ENCODE measurements at regions of chr9 and their contacts with region 1.

Region 1: GRCh38 chr9:36328798-36329411 is 70.7 kb upstream of the GNE start:
- DNase-seq: peak; percentile 88
- H3K4me3 Mint-ChIP-seq: no peak overlapping the region
- H3K27ac Mint-ChIP-seq: no peak overlapping the region
- H3K4me1 Mint-ChIP-seq: peaks cover 4% of the 10 kb centered on the region
- H3K27me3 Mint-ChIP-seq: no peaks in the 10 kb centered on the region

Region 2: DNA sequence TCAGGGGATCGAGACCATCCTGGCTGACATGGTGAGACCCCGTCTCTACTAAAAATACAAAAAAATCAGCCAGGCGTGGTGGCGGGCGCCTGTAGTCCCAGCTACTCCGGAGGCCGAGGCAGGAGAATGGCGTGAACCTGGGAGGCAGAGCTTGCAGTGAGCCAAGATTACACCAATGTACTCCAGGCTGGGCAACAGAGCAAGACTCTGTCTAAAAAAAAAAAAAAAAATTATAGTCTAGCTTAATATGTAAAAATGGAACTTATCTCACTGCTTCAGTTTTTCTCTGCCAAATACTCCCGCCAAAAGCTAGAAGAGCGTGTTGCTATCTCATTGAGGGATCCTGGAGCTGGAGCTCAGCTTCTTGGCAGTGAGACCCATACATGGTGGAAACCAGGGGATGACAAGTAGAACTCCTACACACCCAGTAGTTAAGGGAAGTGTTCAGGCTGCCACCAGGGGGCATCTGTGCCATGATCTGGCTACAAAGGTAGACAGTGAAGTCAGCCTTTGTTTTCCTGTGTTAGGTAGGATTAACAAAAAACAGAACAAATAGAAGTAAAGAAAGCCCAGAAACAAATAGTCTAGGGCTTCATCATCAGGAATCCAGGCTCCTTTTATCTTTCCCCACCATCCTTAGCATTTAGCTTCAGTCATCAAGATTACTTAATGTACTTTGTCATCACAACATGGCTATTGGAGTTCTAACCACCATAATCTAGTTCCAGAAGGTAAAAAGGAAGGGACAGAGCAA is 226.0 kb before region 1 on chr9:
- intact Hi-C with region 1: loop called (anchors 1 kb)
- DNase-seq: peak; percentile 95
- H3K4me3 Mint-ChIP-seq: no peak overlapping the region
- H3K27ac Mint-ChIP-seq: peak overlapping the region; percentile 3
- H3K4me1 Mint-ChIP-seq: peaks cover 12% of the 10 kb centered on the region
- H3K27me3 Mint-ChIP-seq: no peaks in the 10 kb centered on the region

Region 3: DNA sequence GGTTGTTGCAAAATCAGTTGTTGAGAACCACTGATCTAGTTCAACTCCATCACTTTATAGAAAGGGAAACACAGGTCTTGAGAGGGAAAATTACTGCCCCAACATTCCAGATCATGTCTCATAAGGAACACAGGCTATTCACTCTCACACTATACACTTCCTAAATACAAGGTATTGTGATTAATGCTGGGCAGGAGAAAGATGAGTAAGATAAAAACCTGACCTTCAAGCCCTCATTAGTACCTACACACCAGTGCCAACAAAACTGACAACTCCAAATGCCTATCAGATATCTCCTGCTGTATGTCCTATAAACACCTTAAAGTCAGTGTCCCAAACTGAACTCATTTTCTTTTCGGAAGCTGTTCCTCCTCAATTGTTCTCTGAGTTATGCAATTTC is 78.8 kb before region 1 on chr9:
- intact Hi-C with region 1: loop called (anchors 1 kb)
- DNase-seq: no peak
- H3K4me3 Mint-ChIP-seq: no peak overlapping the region
- H3K27ac Mint-ChIP-seq: no peak overlapping the region
- H3K4me1 Mint-ChIP-seq: peaks cover 11% of the 10 kb centered on the region
- H3K27me3 Mint-ChIP-seq: no peaks in the 10 kb centered on the region

Region 4: DNA sequence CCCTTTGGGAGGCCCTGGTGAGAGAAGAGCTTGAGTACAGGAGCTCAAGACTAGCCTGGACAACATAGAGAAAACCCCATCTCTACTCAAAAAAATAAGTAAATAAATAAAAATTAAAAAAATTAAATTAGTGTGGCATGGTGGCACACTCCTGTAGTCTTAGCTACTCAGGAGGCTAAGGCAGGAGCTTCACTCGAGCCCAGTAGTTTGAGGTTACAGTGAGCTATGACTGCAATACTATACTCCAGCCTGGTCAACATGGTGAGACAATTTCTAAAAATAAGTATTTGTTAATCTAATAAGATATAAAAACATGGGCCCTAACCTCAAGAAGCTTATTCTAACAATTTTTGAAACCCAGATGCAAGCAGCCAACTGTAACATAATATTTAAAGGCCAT is 63.6 kb after region 1 on chr9:
- intact Hi-C with region 1: no loop called
- DNase-seq: no peak
- H3K4me3 Mint-ChIP-seq: no peak overlapping the region
- H3K27ac Mint-ChIP-seq: no peak overlapping the region
- H3K4me1 Mint-ChIP-seq: peaks cover 44% of the 10 kb centered on the region
- H3K27me3 Mint-ChIP-seq: no peaks in the 10 kb centered on the region